ENCODE measurements at regions of chr1 and their contacts with region 1.

Region 1: DNA sequence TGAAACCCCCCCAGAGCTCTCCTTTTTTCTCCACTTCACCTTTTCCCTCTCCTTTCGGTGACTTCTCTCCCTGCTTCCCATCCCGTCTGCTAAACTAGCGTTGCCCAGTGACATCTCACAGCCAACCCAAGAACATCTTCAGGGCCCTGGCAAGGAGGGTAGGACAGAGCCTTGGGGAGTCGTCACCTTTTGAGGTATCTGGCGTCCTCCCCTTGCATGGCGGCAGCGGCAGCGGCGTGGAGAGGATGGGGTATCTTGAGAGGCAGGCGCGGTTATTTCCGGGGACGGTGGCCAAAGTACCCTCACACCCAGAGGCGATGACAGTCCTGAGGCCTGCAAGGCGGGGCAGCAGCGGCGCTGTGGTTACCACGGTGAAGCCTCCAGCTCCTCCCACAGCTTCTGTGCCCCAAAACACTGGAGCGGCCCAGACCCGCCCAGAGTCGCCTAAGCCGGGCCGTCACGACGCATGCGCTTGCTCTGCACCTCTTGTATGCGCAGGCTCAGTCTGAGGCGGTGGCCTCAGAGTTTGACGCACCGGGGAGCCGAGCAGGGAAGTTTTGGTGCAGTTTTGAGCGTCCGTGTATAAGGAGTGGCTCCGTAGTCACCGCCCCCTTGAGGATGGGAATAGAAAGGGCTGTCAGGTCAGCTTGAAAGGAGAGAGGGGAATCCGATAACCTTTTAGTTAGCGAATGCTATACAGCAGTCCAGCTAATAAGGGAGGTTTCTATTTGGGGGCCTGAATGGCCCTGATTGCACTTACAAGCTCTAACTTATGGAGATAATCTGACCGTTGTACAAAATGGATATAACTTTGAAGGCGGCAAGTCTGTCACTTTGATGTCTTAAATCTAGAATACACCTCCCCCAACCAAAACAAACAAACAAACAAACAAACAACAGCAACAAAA is at the start of gene KIFAP3:
- DNase-seq: peak; percentile 95
- H3K4me3 Mint-ChIP-seq: peak within 1 kb of the TSS; percentile 95
- H3K27ac Mint-ChIP-seq: peak within 1 kb of the TSS; percentile 96
- H3K4me1 Mint-ChIP-seq: peaks cover 45% of the 10 kb centered on the region
- H3K27me3 Mint-ChIP-seq: no peaks in the 10 kb centered on the region
- total RNA-seq, gene KIFAP3: 12.9 and 13.5 TPM in 2 replicates

Region 2: GRCh38 chr1:170010443-170010842 is 64.1 kb before region 1 on chr1:
- intact Hi-C with region 1: loop called (anchors 2 kb)
- DNase-seq: no peak
- H3K4me3 Mint-ChIP-seq: no peak overlapping the region
- H3K27ac Mint-ChIP-seq: no peak overlapping the region
- H3K4me1 Mint-ChIP-seq: no peaks in the 10 kb centered on the region
- H3K27me3 Mint-ChIP-seq: no peaks in the 10 kb centered on the region

Region 3: DNA sequence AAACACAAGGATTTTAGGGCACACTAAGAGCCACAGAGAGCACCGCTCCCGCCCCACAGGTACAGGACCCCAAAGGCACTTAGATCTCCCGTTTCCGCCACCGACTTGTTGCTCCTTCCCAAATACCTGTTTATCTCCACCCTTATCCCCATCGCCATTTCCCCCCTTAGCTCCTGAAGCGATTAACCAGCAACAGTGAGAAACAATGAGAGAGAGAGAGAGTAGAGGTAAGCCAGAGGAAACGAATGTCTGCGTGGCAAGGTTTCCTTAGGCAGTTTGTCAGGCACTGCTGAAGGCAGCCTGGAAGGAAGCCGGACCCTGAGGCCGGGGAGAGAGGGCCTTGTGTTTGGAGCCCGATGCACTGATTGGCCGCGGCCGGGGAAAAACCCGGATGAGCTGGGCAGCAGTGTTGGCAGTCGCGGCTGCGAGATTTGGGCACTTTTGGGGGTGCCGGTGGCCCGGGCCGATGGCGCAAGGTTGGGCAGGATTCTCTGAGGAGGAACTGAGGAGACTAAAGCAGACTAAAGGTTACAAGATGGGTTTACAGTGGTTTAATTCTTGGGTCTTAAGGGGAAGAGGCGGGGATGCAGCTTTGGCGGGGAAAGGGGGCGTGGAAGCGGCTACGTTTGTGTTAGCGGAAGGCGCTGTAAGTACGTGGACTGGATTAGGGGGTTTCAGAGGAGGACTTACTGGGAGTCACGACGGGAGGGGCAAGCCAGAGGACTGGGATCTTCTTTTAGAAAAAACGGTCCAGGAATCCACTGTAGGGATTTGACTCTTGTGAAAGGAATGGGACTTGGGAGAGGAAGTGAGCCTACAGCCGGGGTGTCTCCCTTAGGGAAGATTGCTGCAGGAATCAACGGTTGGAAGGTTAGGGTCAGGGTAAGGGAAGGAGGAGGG is 457.5 kb after region 1 on chr1 and contains the start of gene GORAB:
- intact Hi-C with region 1: loop called (anchors 1 kb)
- DNase-seq: peak; percentile 82
- H3K4me3 Mint-ChIP-seq: no peak within 1 kb of the TSS
- H3K27ac Mint-ChIP-seq: no peak within 1 kb of the TSS
- H3K4me1 Mint-ChIP-seq: peaks cover 8% of the 10 kb centered on the region
- H3K27me3 Mint-ChIP-seq: peaks cover 4% of the 10 kb centered on the region
- total RNA-seq, gene GORAB: 11.8 and 12.2 TPM in 2 replicates

Measured in activated T-helper 1 cell treated with anti-CD3 and anti-CD28 coated beads, Interleukin-12 subunit alpha, Interleukin-12 subunit beta, Interleukin-2, Interleukin-4 antibody, amounts not matched to agents 30 ng/mL and 10 ng/mL and 1 ng/mL, durations not matched to agents 14 hours and 24 hours and 36 hours (primary cell).